ENCODE measurements at regions of chr13 and their contacts with region 1.

Region 1: GRCh38 chr13:108155185-108156106 is 59.9 kb downstream of the LIG4 start:
- DNase-seq: peak; percentile 25
- ATAC-seq: peak; percentile 34
- H3K4me3 Mint-ChIP-seq: no peak overlapping the region
- H3K27ac Mint-ChIP-seq: no peak overlapping the region
- H3K4me1 Mint-ChIP-seq: no peaks in the 10 kb centered on the region
- H3K27me3 Mint-ChIP-seq: peaks cover 8% of the 10 kb centered on the region
- CTCF ChIP-seq: peak; percentile 99

Region 2: GRCh38 chr13:107205303-107206104 is 949.9 kb before region 1 on chr13:
- CTCF ChIA-PET with region 1: interaction called, 19 read pairs
- POLR2A ChIA-PET with region 1: no interaction called
- intact Hi-C with region 1: loop called (anchors 1 kb)
- DNase-seq: peak; percentile 31
- ATAC-seq: peak; percentile 61
- H3K4me3 Mint-ChIP-seq: no peak overlapping the region
- H3K27ac Mint-ChIP-seq: no peak overlapping the region
- H3K4me1 Mint-ChIP-seq: no peaks in the 10 kb centered on the region
- H3K27me3 Mint-ChIP-seq: no peaks in the 10 kb centered on the region
- CTCF ChIP-seq: peak; percentile 93

Region 3: DNA sequence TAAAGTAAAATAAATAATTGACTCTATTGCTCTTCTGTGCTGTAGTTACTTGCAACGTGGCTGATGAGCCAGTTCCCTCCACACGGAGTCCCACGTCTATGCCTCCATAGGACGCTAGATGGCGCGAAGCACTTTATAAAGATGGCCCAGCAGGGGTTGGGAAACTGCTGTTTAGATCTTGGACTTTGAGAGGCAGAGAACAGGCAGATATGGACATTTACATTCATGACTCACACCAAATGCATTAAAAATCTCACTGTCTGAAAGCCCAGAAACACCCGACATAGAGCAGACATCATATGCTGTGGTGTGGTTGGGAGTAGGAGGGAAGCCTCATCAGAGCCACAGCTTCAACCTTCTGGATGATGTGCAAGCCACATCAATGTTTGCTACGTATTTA is 944.4 kb before region 1 on chr13:
- CTCF ChIA-PET with region 1: interaction called, 19 read pairs
- POLR2A ChIA-PET with region 1: no interaction called
- intact Hi-C with region 1: no loop called
- DNase-seq: no peak
- ATAC-seq: peak; percentile 50
- H3K4me3 Mint-ChIP-seq: no peak overlapping the region
- H3K27ac Mint-ChIP-seq: no peak overlapping the region
- H3K4me1 Mint-ChIP-seq: no peaks in the 10 kb centered on the region
- H3K27me3 Mint-ChIP-seq: no peaks in the 10 kb centered on the region
- CTCF ChIP-seq: no peak

Region 4: DNA sequence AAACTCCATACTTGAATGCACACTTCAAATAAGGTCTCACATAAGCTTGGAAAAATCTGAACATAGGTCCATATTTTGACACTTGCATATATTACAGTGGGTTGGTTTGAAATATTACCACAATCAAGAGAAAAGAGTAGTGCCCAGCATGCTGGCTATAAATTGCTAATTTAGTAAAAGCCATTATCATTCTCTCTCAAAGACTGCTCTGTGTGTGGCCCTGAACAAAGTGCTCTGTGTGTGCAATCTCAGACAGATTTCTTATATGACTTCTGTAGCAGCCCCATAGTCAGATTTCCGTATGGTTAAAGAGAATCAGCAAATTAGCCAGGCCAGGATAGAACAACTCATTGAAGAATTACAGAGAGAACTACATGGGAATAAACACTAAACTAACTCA is 18.3 kb before region 1 on chr13:
- CTCF ChIA-PET with region 1: interaction called, 12 read pairs
- POLR2A ChIA-PET with region 1: no interaction called
- intact Hi-C with region 1: no loop called
- DNase-seq: no peak
- ATAC-seq: no peak
- H3K4me3 Mint-ChIP-seq: no peak overlapping the region
- H3K27ac Mint-ChIP-seq: no peak overlapping the region
- H3K4me1 Mint-ChIP-seq: no peaks in the 10 kb centered on the region
- H3K27me3 Mint-ChIP-seq: peaks cover 13% of the 10 kb centered on the region
- CTCF ChIP-seq: no peak